Activated CD4-positive, alpha-beta T cell treated with anti-CD3 and anti-CD28 coated beads, Interleukin-2, amount 10 ng/mL, durations not matched to agents 7 days and 5 days (primary cell): ENCODE measurements at regions of chr10 and their contacts with region 1.

Region 1: GRCh38 chr10:71378336-71379117 is 18.2 kb upstream of the CDH23 start:
- DNase-seq: no peak
- H3K4me3 Mint-ChIP-seq: no peak overlapping the region
- H3K27ac Mint-ChIP-seq: no peak overlapping the region
- H3K4me1 Mint-ChIP-seq: peaks cover 16% of the 10 kb centered on the region
- H3K27me3 Mint-ChIP-seq: peaks cover 3% of the 10 kb centered on the region

Region 2: DNA sequence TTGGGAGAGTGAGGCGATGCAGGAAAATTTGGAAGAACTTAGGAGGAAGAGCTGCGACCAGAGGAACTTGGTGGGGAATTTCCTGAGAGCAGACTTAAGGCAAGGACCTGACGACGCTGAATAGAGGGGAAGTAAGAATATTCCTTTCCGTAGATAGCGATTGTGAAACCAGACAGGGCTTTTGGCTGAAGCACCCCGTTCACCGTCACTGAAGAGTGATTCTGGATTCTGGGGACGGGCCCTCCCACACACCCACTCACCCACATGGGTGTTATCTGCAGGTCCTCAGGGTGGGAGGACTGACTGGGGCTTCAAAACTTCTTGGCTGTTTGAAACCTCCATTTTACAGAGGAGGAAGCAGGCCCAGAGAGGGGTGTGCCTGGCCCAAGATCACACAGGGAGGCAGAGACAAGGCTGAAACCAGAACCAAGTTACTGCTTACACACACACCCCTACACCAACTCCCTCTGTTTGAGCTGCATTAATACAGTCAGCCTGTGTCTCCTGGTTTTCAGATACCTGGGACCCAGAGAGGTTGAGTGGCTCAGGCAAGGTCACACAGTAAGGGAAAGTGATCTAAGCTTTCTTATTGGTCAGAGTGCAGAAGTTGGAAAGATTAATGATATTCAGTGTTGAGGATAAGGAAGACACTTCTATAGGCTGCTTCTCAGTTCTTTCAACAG is 19.0 kb before region 1 on chr10:
- CTCF ChIA-PET with region 1: interaction called, 11 read pairs
- POLR2A ChIA-PET with region 1: no interaction called
- DNase-seq: no peak
- H3K4me3 Mint-ChIP-seq: no peak overlapping the region
- H3K27ac Mint-ChIP-seq: no peak overlapping the region
- H3K4me1 Mint-ChIP-seq: no peaks in the 10 kb centered on the region
- H3K27me3 Mint-ChIP-seq: no peaks in the 10 kb centered on the region